Pancreas (tissue), 10 donors: ENCODE measurements at regions of chr18 and their contacts with region 1.

Region 1: GRCh38 chr18:70216788-70217187 is 11.3 kb upstream of the RTTN start:
- DNase-seq: no peak
- ATAC-seq: no peak
- H3K4me3 ChIP-seq: no peak overlapping the region
- H3K27ac ChIP-seq: no peak overlapping the region
- H3K4me1 ChIP-seq: no peaks in the 10 kb centered on the region
- H3K27me3 ChIP-seq: no peaks in the 10 kb centered on the region
- CTCF ChIP-seq: no peak

Region 2: DNA sequence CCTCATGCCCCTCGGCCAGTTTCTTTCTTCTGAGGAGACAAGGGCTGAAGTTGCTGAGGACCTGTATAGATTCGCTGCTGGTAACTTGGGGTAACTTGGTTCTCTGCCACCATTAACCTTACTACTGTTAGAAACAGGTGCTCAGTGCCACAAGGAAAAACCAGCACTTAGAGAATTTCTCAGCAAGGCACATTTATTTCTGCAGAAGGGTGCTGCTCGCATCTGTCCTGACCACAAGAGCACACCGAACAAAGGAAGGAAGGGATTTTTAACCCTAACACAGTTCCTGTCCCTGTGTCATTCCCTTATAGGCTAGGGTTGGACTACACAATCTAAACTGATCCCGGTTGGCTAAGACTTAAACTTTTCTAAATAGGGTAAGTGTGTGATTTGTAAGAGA is 226.1 kb after region 1 on chr18:
- intact Hi-C with region 1: loop called in 1 of 3 experiments (anchors 10 kb)
- DNase-seq: no peak
- ATAC-seq: no peak
- H3K4me3 ChIP-seq: no peak overlapping the region
- H3K27ac ChIP-seq: no peak overlapping the region
- H3K4me1 ChIP-seq: no peaks in the 10 kb centered on the region
- H3K27me3 ChIP-seq: no peaks in the 10 kb centered on the region
- CTCF ChIP-seq: no peak